Panc1 (cell line): ENCODE measurements at regions of chr11 and their contacts with region 1.

Region 1: GRCh38 chr11:15074206-15075161 is 1.1 kb downstream of the CALCB start:
- DNase-seq: peak; percentile 33
- ATAC-seq: peak; percentile 95
- H3K4me3 ChIP-seq: peak overlapping the region; percentile 25 to 59
- H3K27ac ChIP-seq: no peak overlapping the region
- H3K4me1 ChIP-seq: 0 out of 2 replicates have a peak, but pooled peaks cover 3% of the 10 kb centered on the region
- H3K27me3 ChIP-seq: peaks cover 6% of the 10 kb centered on the region
- CTCF ChIP-seq: peak; percentile 94

Region 2: DNA sequence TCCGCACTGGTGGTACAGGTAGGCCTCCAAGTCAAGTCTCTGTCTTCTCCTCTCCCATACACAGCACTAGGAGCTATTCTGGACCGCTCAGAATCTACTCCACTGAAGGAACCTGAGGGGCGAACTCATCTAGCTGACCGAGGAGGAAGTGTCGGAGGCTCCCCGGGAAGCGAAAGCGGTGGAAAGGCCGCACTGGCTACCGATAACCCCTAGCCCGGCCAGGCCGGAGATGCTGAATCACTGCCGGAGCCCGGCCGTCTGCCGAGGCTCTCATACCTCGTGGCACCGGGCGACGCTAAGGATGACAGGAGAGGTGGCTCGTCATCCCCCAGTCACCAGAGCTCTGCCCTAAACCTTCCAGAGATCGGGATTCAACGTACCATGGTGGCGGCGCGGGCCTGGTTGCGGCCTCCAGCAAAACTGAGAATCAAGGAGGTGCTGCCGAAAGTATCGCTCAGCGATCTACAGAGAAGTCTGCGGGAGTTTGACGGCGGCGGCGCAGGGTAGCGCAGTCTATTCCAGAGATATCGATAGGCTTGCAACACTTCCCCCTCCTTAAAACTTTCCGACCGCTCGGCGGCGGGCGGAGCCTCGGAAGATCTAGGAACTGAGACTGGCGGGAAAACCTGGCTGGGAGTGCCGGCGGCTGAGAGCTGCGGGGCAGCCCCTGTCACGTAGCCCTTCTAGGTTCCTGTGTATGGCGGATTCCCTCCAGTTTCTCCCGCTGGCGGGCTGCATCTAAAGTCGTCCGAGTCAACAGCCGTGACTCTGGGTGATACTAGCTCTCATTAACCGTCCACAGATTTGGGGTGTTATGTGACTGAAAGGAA is 554.4 kb before region 1 on chr11 and contains the start of gene PSMA1:
- CTCF ChIA-PET with region 1: no interaction called
- POLR2A ChIA-PET with region 1: no interaction called
- in situ Hi-C with region 1: no loop called
- intact Hi-C with region 1: loop called (anchors 10 kb)
- DNase-seq: peak; percentile 79
- ATAC-seq: peak; percentile 98
- H3K4me3 ChIP-seq: peak within 1 kb of the TSS; percentile 91 to 92
- H3K27ac ChIP-seq: peak within 1 kb of the TSS; percentile 99
- H3K4me1 ChIP-seq: peaks cover 11% of the 10 kb centered on the region; the same call in 1 of the 2 replicates
- H3K27me3 ChIP-seq: no peaks in the 10 kb centered on the region
- CTCF ChIP-seq: no peak
- total RNA-seq, gene PSMA1: 198 TPM

Region 3: DNA sequence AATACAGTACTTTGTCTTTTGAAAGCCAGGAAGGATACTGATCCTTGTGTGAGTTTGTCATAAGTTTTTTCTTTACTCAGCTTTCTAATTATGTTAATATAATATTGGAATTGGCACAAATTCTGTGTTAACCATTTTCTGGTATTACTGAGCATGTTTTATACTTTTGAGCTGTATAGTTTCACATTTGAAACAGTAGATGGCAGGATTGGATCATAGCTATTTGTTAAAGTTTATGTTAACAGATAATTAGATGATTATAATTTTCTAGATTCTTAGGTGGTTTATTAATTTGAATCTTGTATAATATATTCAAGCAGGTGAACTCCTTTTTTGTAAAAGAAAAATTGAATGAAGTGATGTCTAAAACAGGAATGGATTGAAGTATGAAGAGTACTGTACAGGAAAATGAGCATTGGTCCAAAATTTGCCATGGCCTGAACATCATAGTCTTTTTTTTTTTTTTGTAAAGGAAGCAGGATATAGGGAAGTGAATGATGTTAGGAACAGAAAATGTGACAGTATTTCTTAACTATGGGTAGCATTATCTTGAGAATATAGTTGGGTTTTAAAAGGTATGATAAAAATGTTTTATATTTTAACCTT is 284.5 kb before region 1 on chr11:
- CTCF ChIA-PET with region 1: interaction called, 3 read pairs
- POLR2A ChIA-PET with region 1: no interaction called
- in situ Hi-C with region 1: no loop called
- intact Hi-C with region 1: loop called (anchors 10 kb)
- DNase-seq: no peak
- ATAC-seq: no peak
- H3K4me3 ChIP-seq: no peak overlapping the region
- H3K27ac ChIP-seq: no peak overlapping the region
- H3K4me1 ChIP-seq: no peaks in the 10 kb centered on the region
- H3K27me3 ChIP-seq: no peaks in the 10 kb centered on the region
- CTCF ChIP-seq: peak; percentile 48; the same call in 1 of the 2 replicates

Region 4: GRCh38 chr11:14974515-14975251 is 99.8 kb before region 1 on chr11:
- CTCF ChIA-PET with region 1: interaction called, 4 read pairs
- POLR2A ChIA-PET with region 1: interaction called, 3 read pairs
- in situ Hi-C with region 1: no loop called
- intact Hi-C with region 1: loop called (anchors 5 kb)
- DNase-seq: peak; percentile 20
- ATAC-seq: peak; percentile 79
- H3K4me3 ChIP-seq: peak overlapping the region in 1 of 2 experiments; percentile 37; a peak in 2 of 4 replicates
- H3K27ac ChIP-seq: no peak overlapping the region
- H3K4me1 ChIP-seq: peaks cover 8% of the 10 kb centered on the region; the same call in 1 of the 2 replicates
- H3K27me3 ChIP-seq: peaks cover 34% of the 10 kb centered on the region
- CTCF ChIP-seq: peak; percentile 89